ENCODE measurements at regions of chr5 and their contacts with region 1.

Region 1: GRCh38 chr5:42950440-42951292 is 89.5 kb downstream of the ANXA2R start:
- DNase-seq: peak; percentile 85
- ATAC-seq: peak; percentile 44
- H3K4me3 ChIP-seq: peak overlapping the region; percentile 67 to 92 (median 85)
- H3K4me3 Mint-ChIP-seq: peak overlapping the region; percentile 99
- H3K27ac ChIP-seq: peak overlapping the region; percentile 93 to 97
- H3K27ac Mint-ChIP-seq: peak overlapping the region; percentile 100
- H3K4me1 ChIP-seq: peaks cover 13 to 33% of the 10 kb centered on the region in 2 donors
- H3K4me1 Mint-ChIP-seq: peaks cover 33% of the 10 kb centered on the region
- H3K27me3 ChIP-seq: no peaks in the 10 kb centered on the region
- H3K27me3 Mint-ChIP-seq: no peaks in the 10 kb centered on the region
- CTCF ChIP-seq: no peak

Region 2: DNA sequence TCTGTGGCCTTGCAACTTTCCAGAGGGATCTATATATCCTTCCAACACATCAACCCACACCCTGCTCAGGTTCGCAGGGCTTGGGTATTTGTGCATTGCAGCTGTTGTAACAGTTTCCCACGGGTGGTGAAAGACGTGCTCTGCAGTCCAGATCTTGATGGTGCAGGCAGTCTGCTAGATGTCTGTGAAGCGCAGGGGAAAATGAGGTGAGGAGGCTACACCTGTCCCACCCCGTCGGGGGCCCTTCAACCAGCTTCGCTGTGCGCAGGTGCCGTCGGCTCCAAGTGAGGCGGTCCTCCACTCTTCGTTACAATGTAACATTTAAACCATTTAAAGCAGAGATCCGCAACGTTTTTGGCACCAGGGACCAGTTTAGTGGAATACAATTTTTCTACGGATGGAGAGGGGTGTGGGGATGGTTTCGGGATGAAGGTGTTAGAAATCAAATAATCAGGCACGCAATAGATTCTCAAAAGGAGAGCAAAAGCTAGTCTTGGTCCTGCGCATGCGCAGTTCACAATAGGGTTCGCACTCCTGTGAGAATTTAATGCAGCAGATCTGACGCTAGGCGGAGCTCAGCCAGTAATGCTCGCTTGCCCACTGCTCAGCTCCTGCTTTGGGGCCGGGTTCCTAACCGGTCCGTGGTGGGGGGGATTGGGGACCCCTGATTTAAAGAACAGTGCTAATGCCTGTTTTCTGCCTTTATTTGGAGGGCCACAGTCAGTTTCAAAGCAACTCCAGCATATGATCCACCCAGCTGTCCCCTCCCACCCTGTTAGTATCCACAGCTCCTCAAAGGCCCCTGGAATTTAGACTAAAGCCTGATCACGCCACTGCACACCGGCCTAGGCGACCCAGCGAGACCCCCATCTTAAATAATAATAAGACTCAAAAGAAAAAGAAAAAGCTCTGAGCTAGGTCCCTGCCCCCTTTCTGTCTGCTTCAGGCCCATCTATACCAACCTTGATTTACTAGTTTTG is 41.9 kb before region 1 on chr5:
- CTCF ChIA-PET with region 1: interaction called, 43 read pairs
- POLR2A ChIA-PET with region 1: interaction called, 10 read pairs
- intact Hi-C with region 1: loop called (anchors 1 kb)
- DNase-seq: peak; percentile 93
- ATAC-seq: peak; percentile 96
- H3K4me3 ChIP-seq: peak overlapping the region; percentile 52 to 88 (median 72)
- H3K4me3 Mint-ChIP-seq: peak overlapping the region; percentile 98
- H3K27ac ChIP-seq: peak overlapping the region in 1 of 2 donors; percentile 6
- H3K27ac Mint-ChIP-seq: peak overlapping the region; percentile 93
- H3K4me1 ChIP-seq: peaks cover 5 to 9% of the 10 kb centered on the region in 2 donors
- H3K4me1 Mint-ChIP-seq: peaks cover 10% of the 10 kb centered on the region
- H3K27me3 ChIP-seq: peaks cover 0 to 7% (median 2%) of the 10 kb centered on the region in 4 experiments
- H3K27me3 Mint-ChIP-seq: peaks cover 21% of the 10 kb centered on the region
- CTCF ChIP-seq: peak; percentile 88

Region 3: GRCh38 chr5:43008369-43009153 is 57.9 kb after region 1 on chr5:
- CTCF ChIA-PET with region 1: interaction called, 23 read pairs
- POLR2A ChIA-PET with region 1: interaction called, 35 read pairs
- intact Hi-C with region 1: loop called (anchors 1 kb)
- DNase-seq: peak; percentile 95
- ATAC-seq: peak; percentile 58
- H3K4me3 ChIP-seq: peak overlapping the region; percentile 69 to 99 (median 76)
- H3K4me3 Mint-ChIP-seq: peak overlapping the region; percentile 89
- H3K27ac ChIP-seq: peak overlapping the region; percentile 83 to 97
- H3K27ac Mint-ChIP-seq: peak overlapping the region; percentile 98
- H3K4me1 ChIP-seq: peaks cover 20 to 38% of the 10 kb centered on the region in 2 donors
- H3K4me1 Mint-ChIP-seq: peaks cover 31% of the 10 kb centered on the region
- H3K27me3 ChIP-seq: no peaks in the 10 kb centered on the region
- H3K27me3 Mint-ChIP-seq: no peaks in the 10 kb centered on the region
- CTCF ChIP-seq: peak; percentile 36

Region 4: GRCh38 chr5:43040287-43041098 is 89.8 kb after region 1 on chr5 and contains the start of gene ANXA2R:
- CTCF ChIA-PET with region 1: interaction called, 72 read pairs
- POLR2A ChIA-PET with region 1: interaction called, 36 read pairs
- intact Hi-C with region 1: loop called (anchors 1 kb)
- DNase-seq: peak; percentile 97
- ATAC-seq: peak; percentile 60
- H3K4me3 ChIP-seq: peak within 1 kb of the TSS; percentile 62 to 95 (median 81)
- H3K4me3 Mint-ChIP-seq: peak within 1 kb of the TSS; percentile 97
- H3K27ac ChIP-seq: peak within 1 kb of the TSS; percentile 98 to 99
- H3K27ac Mint-ChIP-seq: peak within 1 kb of the TSS; percentile 98
- H3K4me1 ChIP-seq: peaks cover 25 to 44% of the 10 kb centered on the region in 2 donors
- H3K4me1 Mint-ChIP-seq: peaks cover 39% of the 10 kb centered on the region
- H3K27me3 ChIP-seq: no peaks in the 10 kb centered on the region
- H3K27me3 Mint-ChIP-seq: no peaks in the 10 kb centered on the region
- CTCF ChIP-seq: peak; percentile 86
- total RNA-seq, gene ANXA2R: 19.3 and 20.0 TPM in 2 replicates

Region 5: GRCh38 chr5:43078986-43079355 is 128.3 kb after region 1 on chr5:
- CTCF ChIA-PET with region 1: no interaction called
- POLR2A ChIA-PET with region 1: no interaction called
- intact Hi-C with region 1: no loop called
- DNase-seq: no peak
- ATAC-seq: no peak
- H3K4me3 ChIP-seq: no peak overlapping the region
- H3K4me3 Mint-ChIP-seq: no peak overlapping the region
- H3K27ac ChIP-seq: no peak overlapping the region
- H3K27ac Mint-ChIP-seq: no peak overlapping the region
- H3K4me1 ChIP-seq: no peaks in the 10 kb centered on the region
- H3K4me1 Mint-ChIP-seq: peaks cover 16% of the 10 kb centered on the region
- H3K27me3 ChIP-seq: no peaks in the 10 kb centered on the region
- H3K27me3 Mint-ChIP-seq: no peaks in the 10 kb centered on the region
- CTCF ChIP-seq: no peak

Region 6: DNA sequence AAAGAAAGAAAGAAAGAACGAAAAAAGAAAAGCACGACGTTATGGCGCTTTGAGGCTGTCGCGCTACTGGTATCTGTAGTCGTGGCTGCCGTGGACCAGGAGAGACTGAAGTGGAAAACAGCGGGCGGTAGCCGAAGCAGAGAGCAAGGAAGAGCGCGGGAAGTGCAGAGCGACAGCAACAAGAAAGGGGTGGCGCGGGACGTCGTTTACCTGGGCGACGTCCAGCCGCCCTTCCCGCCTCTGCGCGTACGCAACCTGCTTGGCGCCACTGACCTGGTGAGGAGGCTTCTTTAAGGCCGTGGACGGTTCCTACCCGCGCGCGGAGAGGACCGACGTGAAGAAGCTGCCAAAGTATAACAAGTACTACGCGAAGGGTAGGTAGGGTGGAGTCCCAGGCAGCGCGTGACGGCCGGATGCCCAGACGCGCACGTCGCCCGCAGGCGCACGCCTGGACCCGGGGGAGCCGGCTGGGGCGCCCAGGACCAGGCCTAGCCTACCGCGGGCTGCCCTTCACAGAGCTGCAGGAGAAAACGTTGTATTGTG is 446.2 kb after region 1 on chr5:
- CTCF ChIA-PET with region 1: no interaction called
- POLR2A ChIA-PET with region 1: no interaction called
- intact Hi-C with region 1: loop called (anchors 2 kb)
- DNase-seq: peak; percentile 82
- ATAC-seq: peak; percentile 96
- H3K4me3 ChIP-seq: peak overlapping the region; percentile 65 to 89 (median 77)
- H3K4me3 Mint-ChIP-seq: peak overlapping the region; percentile 95
- H3K27ac ChIP-seq: peak overlapping the region; percentile 81 to 83
- H3K27ac Mint-ChIP-seq: peak overlapping the region; percentile 93
- H3K4me1 ChIP-seq: peaks cover 9 to 10% of the 10 kb centered on the region in 2 donors
- H3K4me1 Mint-ChIP-seq: peaks cover 21% of the 10 kb centered on the region
- H3K27me3 ChIP-seq: no peaks in the 10 kb centered on the region
- H3K27me3 Mint-ChIP-seq: no peaks in the 10 kb centered on the region
- CTCF ChIP-seq: no peak

Region 7: DNA sequence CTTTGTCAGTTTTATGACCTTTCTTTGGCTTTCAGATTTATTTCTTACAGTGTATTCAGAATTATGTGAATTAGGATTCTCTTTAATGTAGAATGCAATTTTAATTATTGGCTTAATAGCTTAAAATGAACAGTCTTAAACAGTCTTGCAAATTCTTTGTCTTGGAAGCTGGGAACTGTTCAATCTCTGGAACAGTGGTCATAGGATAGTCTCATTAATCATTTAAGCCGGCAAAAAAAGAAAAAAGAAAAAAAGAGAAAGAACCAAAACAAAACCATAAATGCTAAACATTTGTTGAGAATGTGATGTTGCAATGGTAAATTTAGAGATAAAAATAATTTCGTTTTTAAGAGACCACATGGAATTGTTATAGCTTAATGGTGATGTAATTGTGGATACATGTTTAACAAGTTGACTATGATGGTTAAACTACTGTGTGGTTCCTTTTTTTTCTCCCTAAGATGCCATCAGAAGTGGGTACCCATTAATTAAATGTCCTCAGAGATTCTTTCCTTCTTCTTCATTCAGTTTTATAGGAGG is 713.9 kb after region 1 on chr5:
- CTCF ChIA-PET with region 1: no interaction called
- POLR2A ChIA-PET with region 1: no interaction called
- intact Hi-C with region 1: no loop called
- DNase-seq: no peak
- ATAC-seq: no peak
- H3K4me3 ChIP-seq: no peak overlapping the region
- H3K4me3 Mint-ChIP-seq: no peak overlapping the region
- H3K27ac ChIP-seq: no peak overlapping the region
- H3K27ac Mint-ChIP-seq: no peak overlapping the region
- H3K4me1 ChIP-seq: no peaks in the 10 kb centered on the region
- H3K4me1 Mint-ChIP-seq: no peaks in the 10 kb centered on the region
- H3K27me3 ChIP-seq: no peaks in the 10 kb centered on the region
- H3K27me3 Mint-ChIP-seq: no peaks in the 10 kb centered on the region
- CTCF ChIP-seq: no peak